Naive thymus-derived CD4-positive, alpha-beta T cell (primary cell): ENCODE measurements at regions of chr17 and their contacts with region 1.

Region 1: GRCh38 chr17:76384222-76384986 is at the start of gene SPHK1:
- DNase-seq: peak in 7 of 9 donors; percentile 23 to 87 (median 42)
- ATAC-seq: peak; percentile 68
- H3K4me3 ChIP-seq: peak within 1 kb of the TSS; percentile 63
- H3K4me3 Mint-ChIP-seq: peak within 1 kb of the TSS; percentile 86 to 94 (median 92)
- H3K27ac ChIP-seq: no peak within 1 kb of the TSS
- H3K27ac Mint-ChIP-seq: peak within 1 kb of the TSS; percentile 18 to 88 (median 67)
- H3K4me1 ChIP-seq: peaks cover 0 to 15% of the 10 kb centered on the region in 2 donors
- H3K4me1 Mint-ChIP-seq: peaks cover 4 to 17% (median 11%) of the 10 kb centered on the region in 7 donors
- H3K27me3 ChIP-seq: no peaks in the 10 kb centered on the region
- H3K27me3 Mint-ChIP-seq: peaks cover 0 to 2% (median 0%) of the 10 kb centered on the region in 5 donors
- total RNA-seq, gene SPHK1: 0.43 to 14.1 (median 1.9) TPM

Region 2: GRCh38 chr17:76304226-76305134 is 79.9 kb before region 1 on chr17:
- CTCF ChIA-PET with region 1: interaction called, 7 read pairs
- POLR2A ChIA-PET with region 1: no interaction called
- intact Hi-C with region 1: loop called in 1 of 2 experiments (anchors 1 kb)
- DNase-seq: no peak
- ATAC-seq: no peak
- H3K4me3 ChIP-seq: no peak overlapping the region
- H3K4me3 Mint-ChIP-seq: no peak overlapping the region
- H3K27ac ChIP-seq: no peak overlapping the region
- H3K27ac Mint-ChIP-seq: no peak overlapping the region
- H3K4me1 ChIP-seq: no peaks in the 10 kb centered on the region
- H3K4me1 Mint-ChIP-seq: no peaks in the 10 kb centered on the region
- H3K27me3 ChIP-seq: no peaks in the 10 kb centered on the region
- H3K27me3 Mint-ChIP-seq: no peaks in the 10 kb centered on the region

Region 3: DNA sequence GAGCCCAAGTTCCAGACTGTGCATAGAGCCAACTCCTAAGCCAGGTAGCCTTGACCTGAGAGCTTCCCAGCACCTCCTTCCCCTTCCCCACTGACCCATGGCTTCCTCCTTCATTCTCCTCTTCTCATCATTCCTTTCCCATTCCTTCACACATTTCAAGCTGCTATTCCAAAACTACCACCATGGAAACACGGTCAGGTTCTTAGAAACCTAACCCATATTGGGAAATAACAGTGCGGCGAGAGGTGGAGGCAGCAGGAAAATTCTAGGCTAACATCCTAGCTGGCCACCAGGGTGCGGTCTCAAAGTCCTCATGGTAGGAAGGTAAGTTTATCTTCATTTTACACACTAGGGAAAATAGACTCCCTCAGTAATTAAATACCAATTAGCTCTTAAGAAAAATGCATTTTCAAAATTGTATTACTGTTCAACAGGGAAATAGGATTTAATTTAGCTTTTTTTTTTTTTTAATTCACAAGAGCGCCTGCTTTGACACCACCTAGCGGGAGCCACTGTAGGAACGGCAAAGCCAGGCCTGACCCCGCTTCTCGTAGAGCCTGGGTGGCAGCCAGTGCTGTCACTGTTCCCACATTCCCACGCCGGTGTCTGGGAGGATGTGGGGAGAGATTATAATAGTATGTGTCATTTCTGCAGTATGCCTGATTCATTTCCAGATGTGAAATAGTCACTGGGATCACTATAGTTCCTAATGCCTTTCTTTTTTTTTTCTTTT is 14.0 kb before region 1 on chr17:
- CTCF ChIA-PET with region 1: interaction called, 4 read pairs
- POLR2A ChIA-PET with region 1: no interaction called
- intact Hi-C with region 1: loop called in 1 of 2 experiments (anchors 2 kb)
- DNase-seq: no peak
- ATAC-seq: no peak
- H3K4me3 ChIP-seq: no peak overlapping the region
- H3K4me3 Mint-ChIP-seq: no peak overlapping the region
- H3K27ac ChIP-seq: no peak overlapping the region
- H3K27ac Mint-ChIP-seq: no peak overlapping the region
- H3K4me1 ChIP-seq: no peaks in the 10 kb centered on the region
- H3K4me1 Mint-ChIP-seq: no peaks in the 10 kb centered on the region
- H3K27me3 ChIP-seq: no peaks in the 10 kb centered on the region
- H3K27me3 Mint-ChIP-seq: no peaks in the 10 kb centered on the region